Activated CD4-positive, alpha-beta T cell treated with anti-CD3 and anti-CD28 coated beads for 36 hours (primary cell): ENCODE measurements at regions of chr4 and their contacts with region 1.

Region 1: GRCh38 chr4:37977471-37978247 is 17.5 kb downstream of the PTTG2 start:
- DNase-seq: peak; percentile 84
- ATAC-seq: peak; percentile 79
- H3K4me3 Mint-ChIP-seq: peak overlapping the region; percentile 80
- H3K27ac Mint-ChIP-seq: peak overlapping the region; percentile 75
- H3K4me1 Mint-ChIP-seq: peaks cover 42% of the 10 kb centered on the region
- H3K27me3 Mint-ChIP-seq: no peaks in the 10 kb centered on the region

Region 2: DNA sequence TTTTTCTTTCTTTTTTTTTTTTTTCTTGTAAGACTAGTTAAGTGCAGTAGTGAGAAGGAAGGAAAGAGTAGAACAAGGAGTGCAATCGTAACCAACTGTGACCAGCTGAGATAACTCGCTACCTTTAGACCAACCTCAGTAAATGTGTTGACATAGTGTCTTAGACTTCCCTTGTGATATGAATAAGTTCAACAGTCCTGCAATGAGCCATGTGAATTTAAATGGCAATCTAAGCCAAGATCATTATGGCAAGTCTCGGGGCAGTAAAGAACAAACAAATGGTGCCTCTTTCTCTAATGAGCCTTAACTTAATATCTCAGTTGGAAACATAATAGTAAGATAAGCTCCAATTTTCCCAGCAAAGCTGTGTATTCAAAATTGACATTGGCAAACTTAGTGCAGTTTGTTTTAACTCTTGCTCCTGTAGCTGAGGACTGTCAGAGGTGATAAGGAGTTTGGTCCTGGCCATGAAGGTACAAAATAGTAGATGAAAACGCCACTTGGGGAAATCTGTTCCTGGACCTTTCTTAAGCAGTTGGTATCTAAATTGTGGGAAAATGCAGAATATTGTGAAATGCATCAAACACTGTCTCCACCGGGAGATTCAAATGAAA is 277.7 kb before region 1 on chr4:
- CTCF ChIA-PET with region 1: no interaction called
- POLR2A ChIA-PET with region 1: no interaction called
- intact Hi-C with region 1: no loop called
- DNase-seq: no peak
- ATAC-seq: no peak
- H3K4me3 Mint-ChIP-seq: no peak overlapping the region
- H3K27ac Mint-ChIP-seq: no peak overlapping the region
- H3K4me1 Mint-ChIP-seq: no peaks in the 10 kb centered on the region
- H3K27me3 Mint-ChIP-seq: no peaks in the 10 kb centered on the region

Region 3: GRCh38 chr4:37802068-37802666 is 175.5 kb before region 1 on chr4:
- CTCF ChIA-PET with region 1: interaction called, 3 read pairs
- POLR2A ChIA-PET with region 1: no interaction called
- intact Hi-C with region 1: loop called in 1 of 2 experiments (anchors 1 kb)
- DNase-seq: peak; percentile 48
- ATAC-seq: no peak
- H3K4me3 Mint-ChIP-seq: no peak overlapping the region
- H3K27ac Mint-ChIP-seq: no peak overlapping the region
- H3K4me1 Mint-ChIP-seq: no peaks in the 10 kb centered on the region
- H3K27me3 Mint-ChIP-seq: peaks cover 4% of the 10 kb centered on the region

Region 4: DNA sequence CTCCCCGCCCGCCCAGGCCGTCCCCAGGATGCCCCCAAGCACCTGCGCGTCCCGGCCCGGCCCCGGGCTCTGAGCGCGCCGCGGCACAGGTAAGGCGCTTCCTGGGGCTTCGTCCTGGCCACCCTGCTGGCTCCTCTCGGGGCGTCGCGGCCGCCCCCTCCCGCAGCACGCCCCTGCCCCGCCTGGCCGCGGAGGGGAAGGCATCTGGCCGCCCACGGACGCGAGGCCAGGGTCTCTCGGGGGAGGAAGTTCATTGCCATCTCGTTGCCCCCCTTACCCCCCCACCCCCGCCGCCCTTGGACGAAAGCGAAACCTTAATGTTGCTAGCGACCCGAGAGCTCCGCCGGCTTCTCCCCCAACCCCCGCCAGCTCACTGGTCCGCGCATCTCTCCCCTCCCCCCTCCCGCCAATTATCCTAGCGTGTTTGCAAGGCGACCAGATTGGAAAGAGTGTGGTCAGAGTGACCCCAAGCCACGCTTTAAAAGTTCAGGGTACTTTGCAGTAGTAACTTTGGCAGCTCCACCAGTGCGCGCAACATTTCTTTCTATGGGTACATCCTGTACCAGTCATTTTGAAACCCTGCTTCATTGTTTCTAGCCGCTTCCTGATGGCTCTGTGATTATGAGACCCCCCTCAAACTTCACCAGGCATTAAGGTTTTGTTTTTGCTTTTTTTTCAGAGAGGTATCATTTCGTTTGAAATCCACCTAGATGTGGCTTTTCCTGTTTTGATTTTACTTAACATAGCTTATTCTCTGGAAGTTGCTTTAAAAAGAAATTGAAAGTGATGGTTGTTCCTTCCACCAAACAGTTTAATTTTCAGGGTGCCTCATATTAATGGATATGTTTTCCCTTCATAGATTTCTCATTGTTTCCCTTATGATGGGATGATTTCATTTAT is 86.1 kb before region 1 on chr4:
- CTCF ChIA-PET with region 1: no interaction called
- POLR2A ChIA-PET with region 1: no interaction called
- intact Hi-C with region 1: loop called (anchors 1 to 2 kb)
- DNase-seq: peak; percentile 73
- ATAC-seq: peak; percentile 78
- H3K4me3 Mint-ChIP-seq: peak overlapping the region; percentile 78
- H3K27ac Mint-ChIP-seq: peak overlapping the region; percentile 93
- H3K4me1 Mint-ChIP-seq: peaks cover 35% of the 10 kb centered on the region
- H3K27me3 Mint-ChIP-seq: peaks cover 3% of the 10 kb centered on the region

Region 5: DNA sequence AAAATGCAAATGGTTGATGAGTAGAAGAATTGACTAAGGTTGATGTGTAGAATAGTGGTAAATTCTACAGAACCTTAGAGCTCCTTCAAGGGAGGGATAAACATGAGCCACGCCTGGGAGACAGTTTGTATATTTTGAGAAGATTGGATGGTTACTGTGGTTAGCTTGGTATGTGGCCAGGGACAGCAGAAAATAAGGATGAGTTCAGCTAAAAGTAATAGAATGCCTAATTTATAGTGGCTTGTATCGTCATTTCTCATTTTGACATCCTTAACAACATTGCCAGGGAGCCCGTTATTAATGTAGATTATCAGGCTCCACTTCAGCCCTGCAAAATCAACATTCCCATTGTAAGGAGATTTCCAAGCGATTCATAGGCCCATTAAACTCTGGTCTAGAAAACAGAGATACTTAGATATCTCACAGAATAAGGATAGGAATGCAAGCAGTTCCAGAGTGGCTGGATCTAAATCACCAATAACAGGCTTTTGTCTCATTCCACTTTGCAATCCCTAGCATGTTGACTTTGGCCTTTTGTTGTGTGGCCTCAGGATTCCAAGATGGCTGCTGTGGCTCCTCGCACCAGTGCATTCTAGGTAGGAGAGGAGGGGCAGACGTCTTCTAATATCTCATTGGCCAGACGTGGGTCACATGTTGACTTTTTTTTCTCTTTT is 23.9 kb before region 1 on chr4:
- CTCF ChIA-PET with region 1: interaction called, 3 read pairs
- POLR2A ChIA-PET with region 1: interaction called, 3 read pairs
- intact Hi-C with region 1: loop called (anchors 1 kb)
- DNase-seq: peak; percentile 25
- ATAC-seq: peak; percentile 57
- H3K4me3 Mint-ChIP-seq: no peak overlapping the region
- H3K27ac Mint-ChIP-seq: no peak overlapping the region
- H3K4me1 Mint-ChIP-seq: peaks cover 15% of the 10 kb centered on the region
- H3K27me3 Mint-ChIP-seq: no peaks in the 10 kb centered on the region

Region 6: GRCh38 chr4:38663801-38664705 is 686.4 kb after region 1 on chr4 and contains the start of gene KLF3:
- CTCF ChIA-PET with region 1: no interaction called
- POLR2A ChIA-PET with region 1: no interaction called
- intact Hi-C with region 1: loop called in 1 of 2 experiments (anchors 10 kb)
- DNase-seq: peak; percentile 84
- ATAC-seq: peak; percentile 62
- H3K4me3 Mint-ChIP-seq: peak within 1 kb of the TSS; percentile 88
- H3K27ac Mint-ChIP-seq: peak within 1 kb of the TSS; percentile 78
- H3K4me1 Mint-ChIP-seq: peaks cover 61% of the 10 kb centered on the region
- H3K27me3 Mint-ChIP-seq: no peaks in the 10 kb centered on the region
- total RNA-seq, gene KLF3: 6.1 to 6.2 TPM